BJ (cell line): ENCODE measurements at regions of chr20 and their contacts with region 1.

Region 1: DNA sequence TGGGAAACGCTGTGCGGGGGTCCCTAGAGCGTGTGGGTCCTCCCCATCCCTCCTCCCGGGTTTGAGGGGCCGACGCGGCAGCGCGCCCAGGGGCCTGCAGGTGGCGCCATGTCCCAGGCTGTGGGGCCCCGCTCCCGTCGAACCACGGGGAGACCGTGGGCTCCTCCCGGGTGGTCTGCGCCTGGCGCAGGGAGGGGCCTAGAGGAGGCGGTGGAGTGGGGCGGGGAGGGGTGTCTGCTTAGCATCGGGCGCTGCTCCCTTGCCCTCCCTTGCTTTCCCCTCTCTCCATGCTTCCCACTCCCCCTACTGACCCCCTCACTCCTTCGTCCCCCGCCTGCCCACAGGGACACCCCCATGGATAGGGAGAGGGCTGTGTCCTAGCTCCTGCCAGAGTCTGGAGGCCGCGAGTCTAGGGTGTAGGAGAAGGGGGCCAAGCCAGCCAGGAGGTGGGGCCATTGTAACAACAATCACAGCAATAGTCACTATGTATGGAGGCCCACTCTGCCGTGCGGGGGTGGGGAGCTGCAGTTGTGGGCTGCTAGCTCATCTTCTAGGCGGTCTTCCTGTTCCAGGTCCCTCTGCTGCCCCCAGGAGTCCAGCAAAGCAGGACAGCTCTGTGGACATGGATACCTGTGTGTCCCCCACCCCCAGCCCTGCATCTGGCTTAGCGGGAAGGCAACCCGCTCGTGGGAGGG is 51.7 kb downstream of the CHMP4B start:
- DNase-seq: no peak
- H3K4me3 ChIP-seq: no peak overlapping the region
- H3K27me3 ChIP-seq: peaks cover 6% of the 10 kb centered on the region; the same call in 1 of the 2 replicates
- CTCF ChIP-seq: peak; percentile 68

Region 2: GRCh38 chr20:33731693-33732165 is 131.1 kb before region 1 on chr20 and contains the start of gene ZNF341:
- CTCF ChIA-PET with region 1: no interaction called
- POLR2A ChIA-PET with region 1: no interaction called
- DNase-seq: peak; percentile 9
- H3K4me3 ChIP-seq: peak within 1 kb of the TSS; percentile 55
- H3K27me3 ChIP-seq: no peaks in the 10 kb centered on the region
- CTCF ChIP-seq: peak; percentile 77
- polyA plus RNA-seq, gene ZNF341: 1.3 and 2.9 TPM in 2 replicates

Region 3: DNA sequence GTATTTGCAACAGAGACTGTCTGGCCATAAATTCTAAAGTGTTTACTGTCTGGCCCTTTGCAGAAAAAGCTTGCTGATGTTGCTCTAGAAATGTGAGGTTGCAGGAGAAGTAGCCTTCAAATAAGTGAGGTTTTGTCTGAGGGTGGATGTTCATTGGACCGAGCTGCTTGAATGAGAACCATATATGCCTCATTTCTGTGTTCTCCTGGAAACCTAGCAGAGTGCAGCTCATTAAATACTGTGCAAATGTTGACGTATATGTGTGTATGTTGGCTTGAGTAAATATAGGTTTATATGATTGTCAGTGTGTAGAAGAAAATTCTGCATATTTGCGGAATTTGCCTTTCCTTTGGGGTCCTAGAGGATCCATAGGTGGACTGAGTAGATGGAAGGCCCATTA is 12.7 kb before region 1 on chr20:
- CTCF ChIA-PET with region 1: interaction called, 12 read pairs
- POLR2A ChIA-PET with region 1: no interaction called
- DNase-seq: no peak
- H3K4me3 ChIP-seq: no peak overlapping the region
- H3K27me3 ChIP-seq: no peaks in the 10 kb centered on the region
- CTCF ChIP-seq: no peak

Region 4: GRCh38 chr20:33992923-33993575 is 130.2 kb after region 1 on chr20:
- CTCF ChIA-PET with region 1: interaction called, 13 read pairs
- POLR2A ChIA-PET with region 1: no interaction called
- DNase-seq: peak; percentile 98
- H3K4me3 ChIP-seq: peak overlapping the region; percentile 85
- H3K27me3 ChIP-seq: no peaks in the 10 kb centered on the region
- CTCF ChIP-seq: no peak

Region 5: DNA sequence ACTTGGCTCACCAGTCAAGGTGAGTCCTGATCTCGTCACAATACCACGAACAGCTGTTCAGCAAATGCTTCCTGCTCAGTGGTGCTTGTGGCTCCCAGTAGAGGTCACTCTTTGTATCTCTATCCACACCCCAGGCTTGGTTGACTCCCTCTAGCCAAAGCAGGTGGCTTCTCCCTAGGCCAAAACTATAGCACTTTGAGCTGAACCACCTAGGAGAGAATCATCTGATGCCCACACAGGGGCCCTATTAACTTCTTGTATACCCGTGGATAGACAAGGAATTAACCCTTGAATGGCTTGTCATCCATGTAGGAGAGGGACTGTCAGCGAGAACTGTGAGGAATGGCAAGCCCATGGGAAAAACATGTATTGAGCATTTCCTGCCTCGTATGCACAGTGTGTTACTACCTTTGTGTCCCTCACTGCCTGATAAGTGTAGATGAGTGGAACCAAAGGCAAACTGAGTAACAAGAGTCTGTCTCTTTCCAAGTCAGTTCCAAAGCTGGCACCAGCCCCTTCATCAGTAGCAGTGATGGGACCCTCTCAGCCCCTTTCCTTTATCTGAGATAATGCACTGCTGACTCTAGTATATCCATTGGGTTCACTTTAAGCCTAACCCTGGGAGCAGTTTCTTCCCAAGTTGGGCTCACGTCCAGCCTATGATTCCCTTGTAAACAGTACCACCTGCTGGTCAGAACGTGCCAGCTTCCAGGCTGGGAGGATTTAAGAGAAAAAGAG is 206.7 kb after region 1 on chr20:
- CTCF ChIA-PET with region 1: interaction called, 117 read pairs
- POLR2A ChIA-PET with region 1: no interaction called
- DNase-seq: no peak
- H3K4me3 ChIP-seq: no peak overlapping the region
- H3K27me3 ChIP-seq: no peaks in the 10 kb centered on the region
- CTCF ChIP-seq: peak; percentile 84

Region 6: DNA sequence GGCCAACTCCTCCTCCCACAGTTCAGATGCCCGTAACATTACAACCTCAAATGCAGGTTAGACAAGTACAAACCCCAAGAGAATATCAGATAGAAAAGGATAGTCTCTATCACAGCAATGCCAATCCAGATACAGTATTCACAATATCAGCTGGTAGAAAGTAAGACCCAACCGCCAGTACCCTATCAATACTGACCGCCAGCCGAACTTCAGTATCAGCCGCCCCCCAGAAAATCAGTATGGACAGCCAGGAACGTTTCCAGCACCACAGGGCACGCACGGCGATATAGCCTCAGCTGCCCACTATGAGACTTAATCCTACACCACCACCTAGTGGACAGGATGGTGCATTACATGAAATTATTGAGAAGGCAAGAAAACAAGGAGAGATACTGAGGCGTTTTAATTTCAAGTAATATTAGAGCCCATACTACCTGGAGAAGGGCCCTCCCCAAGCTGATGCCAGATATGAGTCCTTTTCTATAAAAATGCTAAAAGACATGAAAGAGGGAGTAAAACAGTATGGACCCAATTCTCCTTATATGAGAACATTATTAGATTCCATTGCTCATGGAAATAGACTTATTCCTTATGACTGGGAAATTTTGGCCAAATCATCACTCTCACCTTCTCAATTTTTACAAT is 266.8 kb after region 1 on chr20:
- CTCF ChIA-PET with region 1: interaction called, 15 read pairs
- POLR2A ChIA-PET with region 1: no interaction called
- DNase-seq: no peak
- H3K4me3 ChIP-seq: no peak overlapping the region
- H3K27me3 ChIP-seq: no peaks in the 10 kb centered on the region
- CTCF ChIP-seq: peak; percentile 80